ENCODE measurements at regions of chr6 and their contacts with region 1.

Region 1: GRCh38 chr6:17584241-17584803 is 15.8 kb upstream of the FAM8A1 start:
- DNase-seq: peak; percentile 45 to 69 (median 59)
- ATAC-seq: peak; percentile 93
- H3K4me3 ChIP-seq: no peak overlapping the region
- H3K27ac ChIP-seq: no peak overlapping the region
- H3K4me1 ChIP-seq: no peaks in the 10 kb centered on the region; a peak in 1 of 5 replicates
- H3K27me3 ChIP-seq: no peaks in the 10 kb centered on the region
- CTCF ChIP-seq: peak; percentile 88 to 96 (median 91)
- EP300 ChIP-seq: peak; percentile 16; the same call in 1 of the 2 replicates
- POLR2A ChIP-seq: no peak
- RAD21 ChIP-seq: peak; percentile 95 to 99

Region 2: DNA sequence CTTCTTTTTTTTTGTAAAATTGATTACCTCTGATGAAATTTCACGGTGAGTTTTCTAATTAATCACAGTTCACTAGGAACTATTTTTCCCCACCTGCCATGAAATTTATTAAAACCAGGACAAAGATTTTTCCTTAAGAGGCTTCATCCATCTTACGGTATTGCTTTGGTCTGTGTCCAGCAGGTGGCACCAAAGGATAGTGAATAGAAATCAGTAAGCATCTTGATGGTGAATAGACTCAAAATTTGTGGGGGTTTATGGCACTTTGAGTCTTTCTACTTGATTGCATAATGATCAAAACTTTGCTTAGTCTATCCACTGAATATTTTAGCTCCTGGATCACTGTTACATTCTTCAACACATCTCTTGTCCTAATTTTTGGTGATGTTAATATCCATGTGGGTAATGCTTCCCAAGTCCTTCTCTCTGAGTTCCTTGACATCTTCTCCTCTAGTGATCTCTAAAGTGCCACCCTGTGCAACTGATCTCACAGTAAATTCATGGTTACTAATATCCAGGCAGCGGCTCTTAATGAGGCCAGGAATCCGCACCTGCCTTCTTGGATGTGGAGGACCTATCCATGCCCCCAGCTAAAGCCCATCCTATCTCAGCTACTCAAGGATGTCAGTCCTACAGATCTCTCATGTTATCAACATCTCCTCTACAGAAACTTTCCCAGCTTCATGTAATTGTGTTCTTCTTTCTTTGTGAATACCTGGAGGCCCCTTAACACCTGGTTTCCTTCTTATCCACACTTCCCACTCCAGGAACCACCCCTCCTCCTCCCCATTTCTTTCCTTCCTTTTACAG is 428.0 kb before region 1 on chr6:
- CTCF ChIA-PET with region 1: interaction called, 63 read pairs
- POLR2A ChIA-PET with region 1: no interaction called
- in situ Hi-C with region 1: no loop called
- intact Hi-C with region 1: loop called (anchors 1 kb)
- DNase-seq: peak; percentile 57 to 81 (median 62)
- ATAC-seq: peak; percentile 87
- H3K4me3 ChIP-seq: no peak overlapping the region
- H3K27ac ChIP-seq: no peak overlapping the region
- H3K4me1 ChIP-seq: no peaks in the 10 kb centered on the region
- H3K27me3 ChIP-seq: no peaks in the 10 kb centered on the region
- CTCF ChIP-seq: peak; percentile 55 to 86 (median 72); a peak in 5 of 6 replicates
- EP300 ChIP-seq: no peak
- POLR2A ChIP-seq: no peak
- RAD21 ChIP-seq: peak; percentile 96 to 97

Region 3: GRCh38 chr6:17193106-17193775 is 391.1 kb before region 1 on chr6:
- CTCF ChIA-PET with region 1: interaction called, 5 read pairs
- POLR2A ChIA-PET with region 1: no interaction called
- in situ Hi-C with region 1: no loop called
- intact Hi-C with region 1: loop called (anchors 1 kb)
- DNase-seq: no peak
- ATAC-seq: no peak
- H3K4me3 ChIP-seq: no peak overlapping the region
- H3K27ac ChIP-seq: no peak overlapping the region
- H3K4me1 ChIP-seq: no peaks in the 10 kb centered on the region
- H3K27me3 ChIP-seq: peaks cover 0 to 4% of the 10 kb centered on the region in 2 experiments; a peak in 1 of 5 replicates
- CTCF ChIP-seq: no peak
- EP300 ChIP-seq: no peak
- POLR2A ChIP-seq: no peak
- RAD21 ChIP-seq: no peak

Region 4: GRCh38 chr6:17278289-17279061 is 305.8 kb before region 1 on chr6:
- CTCF ChIA-PET with region 1: no interaction called
- POLR2A ChIA-PET with region 1: no interaction called
- in situ Hi-C with region 1: no loop called
- intact Hi-C with region 1: loop called (anchors 10 kb)
- DNase-seq: no peak
- ATAC-seq: no peak
- H3K4me3 ChIP-seq: no peak overlapping the region
- H3K27ac ChIP-seq: no peak overlapping the region
- H3K4me1 ChIP-seq: peaks cover 0 to 14% of the 10 kb centered on the region in 2 experiments; a peak in 1 of 5 replicates
- H3K27me3 ChIP-seq: peaks cover 9 to 32% of the 10 kb centered on the region in 2 experiments
- CTCF ChIP-seq: no peak
- EP300 ChIP-seq: no peak
- POLR2A ChIP-seq: no peak
- RAD21 ChIP-seq: no peak

Region 5: DNA sequence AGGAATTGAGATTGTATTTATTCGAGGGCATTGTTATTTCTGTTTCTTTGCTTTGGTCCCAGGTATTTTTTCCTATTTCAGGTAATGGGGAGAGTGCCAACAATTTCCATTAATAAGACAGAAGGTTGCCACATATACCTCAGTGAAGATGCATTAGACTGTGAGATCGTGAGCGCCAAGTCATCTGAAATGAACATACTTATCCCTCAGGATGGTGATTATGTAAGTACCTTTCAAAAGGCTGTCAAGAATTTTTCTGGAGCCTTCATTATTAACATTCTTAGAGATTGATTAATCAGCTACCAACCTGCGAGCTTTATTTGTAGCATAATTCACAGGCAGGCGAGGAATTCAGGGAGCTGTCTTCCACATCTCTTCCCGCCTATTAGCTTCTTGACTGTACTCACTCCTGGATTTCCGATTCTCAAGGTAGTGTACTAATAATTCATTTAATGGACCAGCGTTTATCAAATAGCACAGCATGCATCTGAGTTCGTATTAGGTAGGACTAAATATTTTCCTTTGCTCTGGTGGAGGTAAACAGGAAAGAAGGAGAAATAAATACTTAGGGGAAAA is 32.9 kb before region 1 on chr6:
- CTCF ChIA-PET with region 1: no interaction called
- POLR2A ChIA-PET with region 1: no interaction called
- in situ Hi-C with region 1: no loop called
- intact Hi-C with region 1: no loop called
- DNase-seq: no peak
- ATAC-seq: no peak
- H3K4me3 ChIP-seq: no peak overlapping the region
- H3K27ac ChIP-seq: no peak overlapping the region
- H3K4me1 ChIP-seq: no peaks in the 10 kb centered on the region
- H3K27me3 ChIP-seq: peaks cover 21 to 45% of the 10 kb centered on the region in 2 experiments
- CTCF ChIP-seq: no peak
- EP300 ChIP-seq: no peak
- POLR2A ChIP-seq: no peak
- RAD21 ChIP-seq: no peak

Region 6: DNA sequence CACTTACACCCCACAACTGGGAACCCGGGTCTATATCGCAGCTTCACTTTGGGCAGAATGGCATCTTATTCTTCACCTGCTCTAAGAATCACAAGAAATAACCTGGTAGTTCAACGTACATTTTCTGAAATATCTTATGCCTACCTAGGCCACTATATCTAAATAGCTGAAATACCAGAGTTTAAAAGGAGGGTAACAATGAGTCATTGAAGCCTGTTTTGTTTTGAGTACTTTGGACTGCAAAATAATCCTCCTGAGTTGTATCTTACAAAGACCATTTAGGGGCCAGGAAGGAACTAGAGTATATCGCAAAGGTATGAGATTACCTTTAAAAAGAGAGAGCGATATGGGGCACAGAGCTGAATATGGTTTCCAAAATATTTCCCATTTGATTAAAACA is 219.1 kb after region 1 on chr6:
- CTCF ChIA-PET with region 1: interaction called, 3 read pairs
- POLR2A ChIA-PET with region 1: interaction called, 3 read pairs
- in situ Hi-C with region 1: no loop called
- intact Hi-C with region 1: loop called (anchors 5 kb)
- DNase-seq: no peak
- ATAC-seq: no peak
- H3K4me3 ChIP-seq: no peak overlapping the region
- H3K27ac ChIP-seq: no peak overlapping the region
- H3K4me1 ChIP-seq: no peaks in the 10 kb centered on the region
- H3K27me3 ChIP-seq: no peaks in the 10 kb centered on the region
- CTCF ChIP-seq: no peak
- EP300 ChIP-seq: no peak
- POLR2A ChIP-seq: no peak
- RAD21 ChIP-seq: no peak

Region 7: DNA sequence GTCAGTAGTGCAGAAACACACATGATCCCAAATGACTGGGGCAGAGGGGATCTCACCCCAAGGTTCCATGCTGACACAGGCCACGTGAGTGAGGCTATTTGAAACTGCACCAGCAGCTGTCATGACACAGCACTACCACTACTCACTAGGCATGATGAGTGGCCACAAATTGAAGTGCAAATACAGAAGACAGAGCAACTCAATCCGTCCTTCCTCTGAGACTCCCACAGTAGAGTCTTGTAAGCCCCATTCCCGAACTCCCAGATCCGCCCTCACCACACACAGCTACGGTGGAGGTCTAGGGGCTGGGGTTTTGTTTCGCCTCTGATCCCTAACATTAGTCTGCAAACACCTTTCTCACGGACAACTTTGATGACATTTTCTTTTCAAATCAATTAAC is 235.7 kb after region 1 on chr6:
- CTCF ChIA-PET with region 1: interaction called, 14 read pairs
- POLR2A ChIA-PET with region 1: interaction called, 3 read pairs
- in situ Hi-C with region 1: no loop called
- intact Hi-C with region 1: loop called (anchors 1 kb)
- DNase-seq: peak; percentile 56 to 92 (median 74)
- ATAC-seq: peak; percentile 97
- H3K4me3 ChIP-seq: no peak overlapping the region
- H3K27ac ChIP-seq: peak overlapping the region; percentile 67
- H3K4me1 ChIP-seq: peaks cover 11 to 13% of the 10 kb centered on the region in 2 experiments; a peak in 4 of 5 replicates
- H3K27me3 ChIP-seq: no peaks in the 10 kb centered on the region
- CTCF ChIP-seq: peak; percentile 29 to 38 (median 35); a peak in 3 of 6 replicates
- EP300 ChIP-seq: peak; percentile 61; the same call in 1 of the 2 replicates
- POLR2A ChIP-seq: no peak; the same call in 1 of the 2 replicates
- RAD21 ChIP-seq: peak; percentile 25 to 56